ENCODE measurements at regions of chr2 and their contacts with region 1.

Region 1: DNA sequence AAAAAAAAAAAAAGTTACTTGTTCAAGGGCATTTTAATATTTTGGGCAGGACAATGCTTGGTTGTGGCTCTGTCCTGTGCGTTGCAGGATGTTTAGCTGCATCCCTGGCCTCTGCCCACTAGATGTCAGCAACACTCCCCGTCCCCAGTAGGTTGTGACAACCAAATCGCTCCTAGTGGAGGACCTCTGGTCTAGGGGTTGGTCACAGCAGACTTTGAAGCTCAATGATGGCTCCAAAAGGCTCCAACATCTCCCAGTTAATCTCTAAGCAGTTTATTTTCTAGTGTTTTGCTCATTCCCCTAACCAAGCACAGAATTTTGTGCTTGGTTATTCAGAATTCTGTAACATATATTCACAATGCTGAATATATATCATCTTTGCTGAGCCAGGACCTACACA is 67.0 kb downstream of the CHRNA1 start:
- DNase-seq: peak; percentile 76
- ATAC-seq: peak; percentile 94
- H3K4me3 Mint-ChIP-seq: no peak overlapping the region
- H3K27ac Mint-ChIP-seq: no peak overlapping the region
- H3K4me1 Mint-ChIP-seq: peaks cover 16% of the 10 kb centered on the region
- H3K27me3 Mint-ChIP-seq: no peaks in the 10 kb centered on the region
- CTCF ChIP-seq: peak; percentile 60

Region 2: GRCh38 chr2:174341286-174341994 is 355.8 kb before region 1 on chr2:
- CTCF ChIA-PET with region 1: no interaction called
- POLR2A ChIA-PET with region 1: no interaction called
- DNase-seq: peak; percentile 92
- ATAC-seq: peak; percentile 2; the same call in 1 of the 2 replicates
- H3K4me3 Mint-ChIP-seq: peak overlapping the region; percentile 71
- H3K27ac Mint-ChIP-seq: no peak overlapping the region
- H3K4me1 Mint-ChIP-seq: peaks cover 61% of the 10 kb centered on the region
- H3K27me3 Mint-ChIP-seq: peaks cover 93% of the 10 kb centered on the region
- CTCF ChIP-seq: peak; percentile 95

Region 3: GRCh38 chr2:174667379-174667781 is 29.9 kb before region 1 on chr2:
- CTCF ChIA-PET with region 1: interaction called, 13 read pairs
- POLR2A ChIA-PET with region 1: no interaction called
- DNase-seq: no peak
- ATAC-seq: peak; percentile 86
- H3K4me3 Mint-ChIP-seq: no peak overlapping the region
- H3K27ac Mint-ChIP-seq: no peak overlapping the region
- H3K4me1 Mint-ChIP-seq: peaks cover 20% of the 10 kb centered on the region
- H3K27me3 Mint-ChIP-seq: peaks cover 6% of the 10 kb centered on the region; the same call in 1 of the 2 replicates
- CTCF ChIP-seq: no peak

Region 4: DNA sequence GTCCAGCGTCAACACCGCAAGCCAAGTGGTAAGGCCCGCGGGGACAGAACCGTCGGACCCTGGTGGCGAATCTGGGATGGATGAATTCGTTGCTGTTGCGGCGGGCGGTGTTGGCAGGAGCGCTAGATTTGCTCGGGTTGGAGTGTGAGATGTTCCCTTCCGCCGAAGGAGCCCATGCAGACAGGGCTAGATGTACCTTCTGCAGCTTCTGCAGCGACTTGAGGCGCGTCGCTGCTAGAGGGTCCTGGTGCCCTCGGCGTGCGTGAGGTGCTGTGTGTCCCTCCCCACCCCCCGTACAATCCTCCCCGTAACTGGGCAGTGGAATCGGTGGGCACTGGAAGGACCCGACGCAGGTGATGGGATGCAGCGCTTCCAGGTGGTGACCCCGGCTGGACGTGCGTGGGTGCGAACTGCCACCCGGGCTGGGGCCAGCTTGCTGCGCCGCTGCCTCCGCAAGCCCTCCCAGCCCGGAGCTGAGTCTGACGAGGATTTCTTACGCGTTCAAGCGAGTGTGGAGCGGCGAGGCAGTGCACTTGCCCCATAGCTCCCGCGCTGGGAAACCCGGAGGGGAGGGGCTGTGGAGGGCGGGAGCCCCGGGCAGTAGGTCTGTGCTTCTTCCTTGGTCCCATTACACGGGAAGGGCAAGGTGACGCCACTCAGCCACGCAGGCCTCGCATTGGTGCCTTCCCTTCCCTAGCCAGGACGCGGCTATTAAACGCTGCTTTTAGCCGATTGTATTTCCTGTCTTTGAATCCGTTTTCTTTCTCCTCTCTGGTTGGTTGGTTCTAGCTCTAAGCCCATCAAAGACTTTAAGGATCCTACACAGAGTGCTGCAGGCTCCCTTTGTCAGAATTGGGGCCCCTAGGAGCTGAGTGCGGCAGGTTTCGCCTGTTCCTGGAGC is 32.8 kb after region 1 on chr2:
- CTCF ChIA-PET with region 1: interaction called, 37 read pairs
- POLR2A ChIA-PET with region 1: no interaction called
- DNase-seq: peak; percentile 65
- ATAC-seq: peak; percentile 80
- H3K4me3 Mint-ChIP-seq: peak overlapping the region; percentile 84
- H3K27ac Mint-ChIP-seq: no peak overlapping the region
- H3K4me1 Mint-ChIP-seq: peaks cover 5% of the 10 kb centered on the region
- H3K27me3 Mint-ChIP-seq: peaks cover 37% of the 10 kb centered on the region
- CTCF ChIP-seq: no peak

Region 5: DNA sequence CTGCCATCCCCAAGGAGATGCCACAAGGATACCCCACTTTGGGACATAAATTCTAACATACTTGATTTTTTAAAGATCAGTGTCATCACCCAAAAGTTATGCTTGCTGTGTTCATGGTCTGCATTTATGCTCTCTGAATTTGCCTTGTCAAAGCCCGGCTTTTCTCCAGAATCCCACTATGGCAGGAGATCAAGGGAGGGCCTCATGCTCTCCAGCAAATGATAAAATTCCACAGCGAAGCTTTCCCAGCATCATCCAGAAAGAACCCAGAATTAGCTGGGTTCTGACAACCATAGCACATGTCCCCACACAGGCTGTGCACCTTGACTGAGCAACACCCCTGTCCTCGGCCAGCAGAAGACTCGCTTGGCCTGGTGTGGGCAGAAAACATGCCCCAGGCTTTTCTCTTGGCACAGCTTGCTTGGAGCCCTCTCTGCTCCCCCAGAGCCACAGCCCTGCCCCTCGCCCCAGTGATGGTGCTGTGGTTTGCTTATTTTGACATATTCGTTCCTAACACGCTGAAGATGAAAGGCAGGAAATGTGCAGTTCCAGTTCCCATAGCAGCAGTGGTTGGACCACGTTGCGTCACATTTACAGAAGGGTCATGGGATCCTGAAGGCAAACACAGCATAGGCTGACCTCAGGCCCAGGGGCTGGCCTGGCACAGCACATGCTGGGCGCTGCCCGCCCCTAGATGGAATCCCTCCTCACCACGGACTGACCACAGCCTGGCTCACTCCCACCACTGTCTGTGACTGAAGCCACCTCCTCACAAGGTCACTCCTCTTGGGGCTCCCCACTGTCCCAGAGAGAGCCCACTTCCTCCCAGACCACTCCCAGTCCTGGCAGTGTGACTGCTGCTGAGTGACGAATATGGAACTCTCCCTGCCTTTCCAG is 81.1 kb after region 1 on chr2:
- CTCF ChIA-PET with region 1: interaction called, 10 read pairs
- POLR2A ChIA-PET with region 1: no interaction called
- DNase-seq: no peak
- ATAC-seq: no peak
- H3K4me3 Mint-ChIP-seq: no peak overlapping the region
- H3K27ac Mint-ChIP-seq: no peak overlapping the region
- H3K4me1 Mint-ChIP-seq: peaks cover 83% of the 10 kb centered on the region
- H3K27me3 Mint-ChIP-seq: no peaks in the 10 kb centered on the region; the same call in none of the 2 replicates
- CTCF ChIP-seq: no peak

Region 6: DNA sequence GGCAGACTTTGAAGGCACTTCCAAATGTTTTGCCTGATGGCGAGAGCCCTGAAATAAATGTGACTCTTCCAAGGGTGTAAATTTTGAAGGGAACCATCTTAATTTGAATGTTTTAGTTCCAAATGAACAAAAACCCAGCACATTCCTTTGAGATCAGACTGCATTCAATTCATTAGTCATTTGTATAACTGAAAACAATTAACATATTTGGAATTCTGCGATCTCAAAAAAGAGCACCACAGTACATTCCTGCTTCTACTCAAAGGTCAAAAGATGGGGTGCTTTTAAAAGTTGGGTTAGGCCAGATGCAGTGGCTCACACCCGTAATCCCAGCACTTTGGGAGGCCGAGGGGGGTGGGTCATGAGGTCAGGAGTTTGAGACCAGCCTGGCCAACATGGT is 105.2 kb after region 1 on chr2:
- CTCF ChIA-PET with region 1: no interaction called
- POLR2A ChIA-PET with region 1: no interaction called
- DNase-seq: no peak
- ATAC-seq: no peak
- H3K4me3 Mint-ChIP-seq: no peak overlapping the region
- H3K27ac Mint-ChIP-seq: no peak overlapping the region
- H3K4me1 Mint-ChIP-seq: peaks cover 14% of the 10 kb centered on the region
- H3K27me3 Mint-ChIP-seq: no peaks in the 10 kb centered on the region
- CTCF ChIP-seq: no peak

Region 7: GRCh38 chr2:175057078-175057685 is 359.9 kb after region 1 on chr2:
- CTCF ChIA-PET with region 1: interaction called, 12 read pairs
- POLR2A ChIA-PET with region 1: no interaction called
- DNase-seq: peak; percentile 41
- ATAC-seq: peak; percentile 91
- H3K4me3 Mint-ChIP-seq: no peak overlapping the region
- H3K27ac Mint-ChIP-seq: 0 out of 2 replicates have a peak overlapping the region, but pooled peaks have one; percentile 29
- H3K4me1 Mint-ChIP-seq: peaks cover 15% of the 10 kb centered on the region
- H3K27me3 Mint-ChIP-seq: no peaks in the 10 kb centered on the region
- CTCF ChIP-seq: no peak